Motor neuron (in vitro differentiated cells): ENCODE measurements at regions of chr5 and their contacts with region 1.

Region 1: DNA sequence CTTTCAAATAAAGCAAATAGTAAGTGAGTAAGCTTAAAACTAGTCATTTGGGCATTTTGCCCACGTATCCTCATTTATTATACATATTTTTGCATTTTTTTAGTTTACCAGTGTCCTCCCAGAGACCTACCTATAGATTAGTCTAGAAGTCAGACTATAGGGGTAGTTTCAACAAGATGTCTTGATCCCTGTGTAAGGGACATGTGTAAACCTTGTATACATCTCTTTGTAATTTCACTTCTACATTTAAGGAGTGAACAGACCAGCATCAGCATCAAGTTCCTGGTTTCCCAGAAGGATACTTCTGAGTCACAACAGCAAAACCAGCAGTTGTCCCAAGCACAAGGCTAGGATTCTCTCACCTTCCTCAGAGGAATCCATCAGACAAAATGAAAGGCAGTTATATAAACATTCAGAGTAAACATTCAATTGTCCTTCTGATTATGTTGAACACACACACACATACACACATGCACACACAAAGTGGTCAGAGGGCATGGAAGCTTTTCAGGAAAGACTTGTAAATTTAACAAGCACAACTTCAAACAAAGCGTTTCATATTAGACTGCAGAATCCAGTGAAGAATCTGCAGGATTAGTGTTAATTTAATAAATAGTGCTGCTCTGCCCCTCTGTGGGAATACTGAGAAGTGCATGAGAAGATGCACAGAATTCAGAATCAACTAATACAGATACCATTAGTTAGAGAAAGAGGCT is 55.4 kb downstream of the HINT1 start:
- ATAC-seq: peak; percentile 36 to 80 (median 64)
- H3K4me3 ChIP-seq: no peak overlapping the region
- H3K27ac ChIP-seq: no peak overlapping the region
- H3K4me1 ChIP-seq: no peaks in the 10 kb centered on the region

Region 2: GRCh38 chr5:129172580-129172979 is 1937.1 kb before region 1 on chr5:
- in situ Hi-C with region 1: loop called in 1 of 9 experiments (anchors 25 kb)
- ATAC-seq: peak in 2 of 8 experiments; percentile 49 to 52
- H3K4me3 ChIP-seq: no peak overlapping the region
- H3K27ac ChIP-seq: no peak overlapping the region
- H3K4me1 ChIP-seq: no peaks in the 10 kb centered on the region

Region 3: GRCh38 chr5:129781594-129781993 is 1328.1 kb before region 1 on chr5:
- in situ Hi-C with region 1: loop called in 1 of 9 experiments (anchors 25 kb)
- ATAC-seq: no peak
- H3K4me3 ChIP-seq: no peak overlapping the region
- H3K27ac ChIP-seq: no peak overlapping the region
- H3K4me1 ChIP-seq: no peaks in the 10 kb centered on the region

Region 4: GRCh38 chr5:129904102-129904666 is 1205.5 kb before region 1 on chr5 and contains the start of gene CHSY3:
- in situ Hi-C with region 1: loop called in 2 of 9 experiments (anchors 25 kb)
- ATAC-seq: peak; percentile 75 to 87 (median 85)
- H3K4me3 ChIP-seq: peak within 1 kb of the TSS; percentile 60 to 91 (median 71)
- H3K27ac ChIP-seq: no peak within 1 kb of the TSS
- H3K4me1 ChIP-seq: peaks cover 0 to 8% of the 10 kb centered on the region in 2 donors
- total RNA-seq, gene CHSY3: 0.42 to 6.8 (median 1.8) TPM

Region 5: DNA sequence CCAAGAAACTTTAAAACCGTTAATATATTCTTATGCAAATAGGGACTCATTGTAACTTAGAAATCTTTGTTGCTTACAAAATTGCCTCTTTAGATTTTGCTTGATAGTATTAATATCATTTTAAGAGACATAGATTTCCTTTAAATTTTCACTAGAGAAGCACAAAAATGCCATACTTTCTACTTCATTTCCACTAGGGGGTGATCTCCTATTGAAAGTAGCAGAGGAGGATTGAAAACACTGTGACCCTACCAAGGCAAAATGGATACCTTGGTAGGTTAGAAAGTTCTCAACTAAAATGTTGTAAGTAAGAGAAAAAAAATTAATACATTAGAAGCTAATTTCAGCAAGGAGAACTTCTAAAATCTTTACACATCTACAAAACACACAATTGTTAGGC is 1000.5 kb before region 1 on chr5:
- in situ Hi-C with region 1: loop called in 2 of 9 experiments (anchors 25 kb)
- ATAC-seq: peak in 2 of 8 experiments; percentile 20 to 37
- H3K4me3 ChIP-seq: no peak overlapping the region
- H3K27ac ChIP-seq: no peak overlapping the region
- H3K4me1 ChIP-seq: peaks cover 0 to 4% of the 10 kb centered on the region in 2 donors

Region 6: GRCh38 chr5:130427222-130427955 is 682.3 kb before region 1 on chr5:
- in situ Hi-C with region 1: no loop called
- ATAC-seq: peak in 5 of 8 experiments; percentile 15 to 90 (median 85)
- H3K4me3 ChIP-seq: no peak overlapping the region
- H3K27ac ChIP-seq: no peak overlapping the region
- H3K4me1 ChIP-seq: peaks cover 9 to 26% of the 10 kb centered on the region in 2 donors

Region 7: GRCh38 chr5:130871346-130872086 is 238.2 kb before region 1 on chr5:
- in situ Hi-C with region 1: loop called in 1 of 9 experiments (anchors 10 kb)
- ATAC-seq: peak in 3 of 8 experiments; percentile 39 to 42 (median 41)
- H3K4me3 ChIP-seq: no peak overlapping the region
- H3K27ac ChIP-seq: no peak overlapping the region
- H3K4me1 ChIP-seq: no peaks in the 10 kb centered on the region

Region 8: DNA sequence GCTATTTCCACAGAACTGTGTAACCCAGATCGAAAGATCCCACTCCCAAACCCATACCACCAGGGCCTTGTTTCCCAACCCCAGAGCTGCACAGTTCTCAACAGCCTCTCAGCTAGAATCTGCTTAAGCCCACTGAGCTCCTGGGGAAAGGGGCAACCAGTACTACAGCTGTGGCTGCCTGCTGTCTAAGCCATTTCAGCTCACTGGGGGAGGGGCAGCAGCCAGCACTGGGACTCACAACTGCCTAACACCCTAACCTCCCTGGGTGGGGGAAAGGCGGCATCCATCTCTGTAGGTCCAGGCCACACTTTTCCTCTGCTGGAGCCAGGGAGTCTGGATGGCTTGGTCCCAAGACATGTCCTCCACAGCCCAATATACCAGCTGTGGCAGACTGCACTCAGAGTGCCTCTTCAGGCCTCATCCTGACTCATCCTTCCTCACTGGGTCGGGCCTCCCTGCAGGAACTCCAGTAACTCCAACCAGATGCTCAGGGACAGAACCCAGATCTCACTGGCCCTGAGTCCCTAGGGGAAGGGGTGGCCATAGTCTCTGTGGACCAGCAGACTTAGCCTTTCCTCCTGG is 186.1 kb before region 1 on chr5:
- in situ Hi-C with region 1: no loop called
- ATAC-seq: peak in 1 of 8 experiments; percentile 63
- H3K4me3 ChIP-seq: no peak overlapping the region
- H3K27ac ChIP-seq: no peak overlapping the region
- H3K4me1 ChIP-seq: no peaks in the 10 kb centered on the region